ENCODE measurements at regions of chr5 and their contacts with region 1.

Region 1: GRCh38 chr5:164048359-164048926 is 543.0 kb downstream of the MAT2B start:
- DNase-seq: peak; percentile 50
- H3K4me3 ChIP-seq: no peak overlapping the region
- H3K27ac ChIP-seq: no peak overlapping the region
- H3K4me1 ChIP-seq: no peaks in the 10 kb centered on the region
- H3K27me3 ChIP-seq: no peaks in the 10 kb centered on the region
- CTCF ChIP-seq: no peak
- POLR2A ChIP-seq: no peak

Region 2: DNA sequence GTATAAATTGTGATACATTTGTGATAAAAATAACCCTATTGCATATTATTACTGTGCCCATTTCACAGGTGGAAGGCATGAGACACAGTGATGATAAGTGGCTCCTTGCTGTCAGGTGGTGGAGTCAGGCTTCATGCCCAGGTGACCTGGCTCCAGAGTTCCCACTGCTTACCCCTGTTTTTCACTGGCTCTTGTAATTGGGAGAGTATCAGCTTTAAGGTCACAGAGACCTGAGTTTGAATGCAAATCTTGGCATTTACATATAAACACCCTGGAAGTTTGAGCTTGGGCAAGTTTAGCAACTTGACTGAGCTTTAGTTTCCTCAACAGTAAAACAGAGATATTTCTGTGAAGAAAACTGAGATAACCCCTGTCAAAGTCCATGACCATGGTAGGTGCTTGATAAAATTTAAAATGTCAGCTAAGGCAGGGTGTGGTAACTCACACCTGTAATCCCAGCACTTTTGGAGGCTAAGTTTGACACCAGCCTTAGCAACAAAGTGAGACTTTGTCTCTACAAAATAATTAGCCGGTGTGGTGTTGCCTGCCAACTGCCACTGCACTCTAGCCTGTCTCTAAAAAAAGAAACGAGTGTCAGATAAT is 513.9 kb before region 1 on chr5:
- CTCF ChIA-PET with region 1: no interaction called
- POLR2A ChIA-PET with region 1: no interaction called
- dilution Hi-C with region 1: no loop called
- intact Hi-C with region 1: no loop called
- DNase-seq: no peak
- H3K4me3 ChIP-seq: no peak overlapping the region
- H3K27ac ChIP-seq: no peak overlapping the region
- H3K4me1 ChIP-seq: no peaks in the 10 kb centered on the region
- H3K27me3 ChIP-seq: peaks cover 2 to 9% of the 10 kb centered on the region in 2 experiments
- CTCF ChIP-seq: no peak
- POLR2A ChIP-seq: no peak

Region 3: DNA sequence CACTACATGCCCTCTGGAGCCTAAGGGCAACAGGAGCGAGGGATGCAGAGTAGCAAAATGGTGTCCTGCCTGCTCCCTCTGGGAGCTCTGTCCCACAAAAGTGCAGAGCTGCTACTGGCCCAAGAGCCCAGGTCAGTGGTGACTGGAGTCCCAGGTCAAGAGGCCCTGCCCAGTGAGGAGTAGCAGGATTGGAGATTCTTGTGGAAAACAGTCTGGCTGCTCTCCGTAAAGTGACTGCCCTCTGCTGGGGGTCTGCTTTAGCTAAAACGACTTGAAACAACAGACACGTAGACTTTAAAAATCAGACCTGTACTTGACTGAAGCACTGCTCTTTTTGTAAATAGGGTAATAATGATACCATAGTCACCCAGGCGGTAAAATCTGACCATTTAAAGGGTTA is 374.0 kb after region 1 on chr5:
- CTCF ChIA-PET with region 1: interaction called, 4 read pairs
- POLR2A ChIA-PET with region 1: no interaction called
- dilution Hi-C with region 1: no loop called
- intact Hi-C with region 1: loop called (anchors 10 kb)
- DNase-seq: peak; percentile 43
- H3K4me3 ChIP-seq: no peak overlapping the region
- H3K27ac ChIP-seq: no peak overlapping the region
- H3K4me1 ChIP-seq: no peaks in the 10 kb centered on the region
- H3K27me3 ChIP-seq: no peaks in the 10 kb centered on the region
- CTCF ChIP-seq: peak in 1 of 2 donors; percentile 36
- POLR2A ChIP-seq: no peak

Region 4: DNA sequence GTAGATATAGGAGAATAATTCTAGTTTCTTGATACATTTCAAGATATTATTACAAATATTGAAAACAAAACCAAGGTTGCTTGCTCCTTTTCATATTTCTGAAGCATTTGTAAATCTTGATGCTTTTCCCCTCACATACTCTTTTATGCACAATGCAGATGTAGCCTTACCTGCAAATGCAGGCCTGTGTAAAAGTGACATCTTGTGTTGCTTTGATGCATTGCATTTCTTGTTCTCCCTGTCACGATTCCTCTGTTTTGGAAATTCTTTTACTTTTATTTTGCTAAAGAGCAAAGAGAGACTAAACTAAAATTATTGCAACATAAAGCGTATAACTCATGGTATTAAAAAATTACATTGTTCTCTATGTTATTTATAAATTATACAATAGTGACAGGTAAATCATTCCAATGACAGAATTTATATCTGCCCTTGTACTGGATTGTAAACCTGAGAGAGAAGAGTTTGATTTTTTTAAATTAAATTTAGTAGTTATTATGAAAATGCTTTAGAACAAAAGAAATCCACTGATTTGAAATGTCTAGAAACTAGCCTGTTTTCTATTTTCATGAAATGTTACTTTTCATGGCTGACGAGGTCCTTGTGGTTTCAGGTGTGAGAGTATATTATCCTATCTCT is 427.0 kb after region 1 on chr5:
- CTCF ChIA-PET with region 1: interaction called, 9 read pairs
- POLR2A ChIA-PET with region 1: no interaction called
- dilution Hi-C with region 1: no loop called
- intact Hi-C with region 1: loop called (anchors 1 kb)
- DNase-seq: peak; percentile 47
- H3K4me3 ChIP-seq: no peak overlapping the region
- H3K27ac ChIP-seq: no peak overlapping the region
- H3K4me1 ChIP-seq: no peaks in the 10 kb centered on the region
- H3K27me3 ChIP-seq: no peaks in the 10 kb centered on the region
- CTCF ChIP-seq: peak in 1 of 2 donors; percentile 45
- POLR2A ChIP-seq: no peak

Measured in endothelial cell of umbilical vein (primary cell).